ENCODE measurements at regions of chr1 and their contacts with region 1.

Region 1: GRCh38 chr1:156155756-156156510 is 2.5 kb downstream of the SEMA4A start:
- DNase-seq: peak in 1 of 5 donors; percentile 41
- H3K4me3 ChIP-seq: no peak overlapping the region
- H3K4me3 Mint-ChIP-seq: peak overlapping the region in 2 of 8 donors; percentile 6 to 29
- H3K27ac ChIP-seq: no peak overlapping the region
- H3K27ac Mint-ChIP-seq: peak overlapping the region in 5 of 7 donors; percentile 38 to 72 (median 57)
- H3K4me1 ChIP-seq: peaks cover 8% of the 10 kb centered on the region
- H3K4me1 Mint-ChIP-seq: peaks cover 4 to 48% (median 14%) of the 10 kb centered on the region in 4 donors
- H3K27me3 ChIP-seq: no peaks in the 10 kb centered on the region
- H3K27me3 Mint-ChIP-seq: no peaks in the 10 kb centered on the region

Region 2: DNA sequence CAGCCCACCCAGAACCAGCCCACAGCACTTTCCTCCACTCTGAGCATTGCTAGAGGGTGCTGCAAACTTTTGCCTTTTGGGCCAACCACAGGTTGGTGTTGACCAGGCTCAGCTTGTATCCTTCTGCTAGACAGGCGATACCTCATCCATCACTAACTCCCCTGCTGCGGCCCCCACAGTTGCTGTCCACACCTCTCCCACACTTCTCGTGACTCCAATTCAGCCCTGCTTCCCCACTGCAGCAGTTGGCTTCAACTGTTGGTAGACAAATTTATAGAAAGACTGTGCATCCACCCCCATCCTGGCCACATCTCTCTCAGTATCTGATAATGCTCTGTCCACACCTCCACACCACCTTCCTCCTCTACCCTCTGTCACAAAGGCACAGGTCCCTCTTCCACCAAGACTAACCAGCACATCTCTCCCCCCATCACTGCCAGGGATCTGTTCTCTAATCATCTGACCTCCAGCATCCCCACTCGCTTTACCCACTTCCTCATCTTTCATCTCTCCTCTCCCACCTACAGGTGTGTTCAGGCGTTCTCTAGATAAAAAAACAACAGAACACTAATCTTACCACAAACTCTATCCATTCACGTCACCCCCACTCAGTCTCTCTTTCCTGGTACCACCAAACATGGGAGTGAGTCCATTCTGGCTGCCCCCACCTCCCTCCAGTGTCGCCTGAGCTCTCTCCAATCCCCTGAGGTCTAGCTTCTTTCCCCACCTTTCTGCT is 22.2 kb after region 1 on chr1:
- CTCF ChIA-PET with region 1: no interaction called
- POLR2A ChIA-PET with region 1: no interaction called
- intact Hi-C with region 1: loop called (anchors 1 kb)
- DNase-seq: peak in 3 of 5 donors; percentile 23 to 38 (median 29)
- H3K4me3 ChIP-seq: no peak overlapping the region
- H3K4me3 Mint-ChIP-seq: peak overlapping the region in 5 of 8 donors; percentile 5 to 26 (median 13)
- H3K27ac ChIP-seq: no peak overlapping the region
- H3K27ac Mint-ChIP-seq: peak overlapping the region in 5 of 7 donors; percentile 17 to 52 (median 28)
- H3K4me1 ChIP-seq: peaks cover 13% of the 10 kb centered on the region
- H3K4me1 Mint-ChIP-seq: peaks cover 6 to 12% (median 7%) of the 10 kb centered on the region in 4 donors
- H3K27me3 ChIP-seq: no peaks in the 10 kb centered on the region
- H3K27me3 Mint-ChIP-seq: no peaks in the 10 kb centered on the region

Measured in CD4-positive, alpha-beta memory T cell (primary cell).